Activated CD4-positive, alpha-beta T cell treated with anti-CD3 and anti-CD28 coated beads for 36 hours (primary cell): ENCODE measurements at regions of chr2 and their contacts with region 1.

Region 1: GRCh38 chr2:112054847-112055729 is at the start of gene TMEM87B:
- DNase-seq: peak; percentile 100
- ATAC-seq: peak; percentile 79
- H3K4me3 Mint-ChIP-seq: peak within 1 kb of the TSS; percentile 97
- H3K27ac Mint-ChIP-seq: peak within 1 kb of the TSS; percentile 99
- H3K4me1 Mint-ChIP-seq: peaks cover 37% of the 10 kb centered on the region
- H3K27me3 Mint-ChIP-seq: no peaks in the 10 kb centered on the region
- total RNA-seq, gene TMEM87B: 14.5 to 17.6 TPM

Region 2: GRCh38 chr2:111897924-111898702 is 157.0 kb before region 1 on chr2 and contains the start of gene MERTK:
- CTCF ChIA-PET with region 1: interaction called, 13 read pairs
- POLR2A ChIA-PET with region 1: no interaction called
- intact Hi-C with region 1: loop called in 1 of 2 experiments (anchors 2 kb)
- DNase-seq: peak; percentile 83
- ATAC-seq: peak; percentile 96
- H3K4me3 Mint-ChIP-seq: peak within 1 kb of the TSS; percentile 73
- H3K27ac Mint-ChIP-seq: no peak within 1 kb of the TSS
- H3K4me1 Mint-ChIP-seq: peaks cover 7% of the 10 kb centered on the region
- H3K27me3 Mint-ChIP-seq: peaks cover 15% of the 10 kb centered on the region
- total RNA-seq, gene MERTK: 0.94 to 1.4 TPM

Region 3: DNA sequence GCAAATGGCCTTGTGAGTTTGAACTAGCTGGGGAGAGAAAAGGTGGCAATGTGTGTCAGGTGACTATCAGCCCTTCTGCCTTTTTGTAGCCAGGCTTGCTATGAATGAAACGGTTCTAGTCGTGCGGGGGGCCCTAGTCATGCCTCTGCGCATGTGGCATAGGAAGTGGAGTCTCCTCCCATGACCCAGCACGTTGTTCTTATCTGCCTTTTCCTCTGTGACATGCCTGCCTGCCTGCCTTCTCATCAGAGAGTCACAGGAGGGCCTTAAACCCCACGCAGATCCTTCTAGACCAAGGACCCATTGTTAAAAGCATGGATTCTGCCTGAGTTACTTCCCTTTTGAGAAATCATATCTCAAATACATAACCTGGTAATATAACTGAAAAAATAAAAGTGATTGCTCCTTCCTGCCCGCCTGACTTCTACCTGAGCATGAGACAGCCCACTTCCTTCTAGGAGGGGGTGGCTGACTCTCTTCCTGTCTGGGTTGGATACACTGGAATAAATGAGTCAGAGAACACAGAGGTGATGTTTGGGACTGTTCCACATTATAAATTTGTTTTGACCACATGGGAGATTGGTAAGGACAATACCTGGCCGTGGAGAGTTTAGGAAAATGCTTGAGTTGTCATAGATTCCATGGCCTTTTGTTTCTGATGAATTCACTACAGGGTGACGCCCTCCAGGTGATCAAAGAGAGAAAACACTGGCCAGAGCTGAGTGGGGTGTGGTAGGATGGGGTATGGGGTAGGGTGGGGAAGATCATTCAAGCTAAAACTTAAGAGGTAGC is 132.9 kb after region 1 on chr2:
- CTCF ChIA-PET with region 1: interaction called, 4 read pairs
- POLR2A ChIA-PET with region 1: interaction called, 5 read pairs
- intact Hi-C with region 1: loop called (anchors 1 to 5 kb)
- DNase-seq: peak; percentile 90
- ATAC-seq: peak; percentile 86
- H3K4me3 Mint-ChIP-seq: peak overlapping the region; percentile 62
- H3K27ac Mint-ChIP-seq: peak overlapping the region; percentile 96
- H3K4me1 Mint-ChIP-seq: peaks cover 90% of the 10 kb centered on the region
- H3K27me3 Mint-ChIP-seq: no peaks in the 10 kb centered on the region

Region 4: GRCh38 chr2:112314856-112315255 is 259.8 kb after region 1 on chr2:
- CTCF ChIA-PET with region 1: no interaction called
- POLR2A ChIA-PET with region 1: no interaction called
- intact Hi-C with region 1: no loop called
- DNase-seq: no peak
- ATAC-seq: no peak
- H3K4me3 Mint-ChIP-seq: no peak overlapping the region
- H3K27ac Mint-ChIP-seq: no peak overlapping the region
- H3K4me1 Mint-ChIP-seq: no peaks in the 10 kb centered on the region
- H3K27me3 Mint-ChIP-seq: no peaks in the 10 kb centered on the region

Region 5: GRCh38 chr2:112481050-112481527 is 426.0 kb after region 1 on chr2:
- CTCF ChIA-PET with region 1: no interaction called
- POLR2A ChIA-PET with region 1: no interaction called
- intact Hi-C with region 1: loop called in 1 of 2 experiments (anchors 1 kb)
- DNase-seq: peak; percentile 93
- ATAC-seq: peak; percentile 88
- H3K4me3 Mint-ChIP-seq: peak overlapping the region; percentile 81
- H3K27ac Mint-ChIP-seq: peak overlapping the region; percentile 85
- H3K4me1 Mint-ChIP-seq: peaks cover 32% of the 10 kb centered on the region
- H3K27me3 Mint-ChIP-seq: no peaks in the 10 kb centered on the region

Region 6: DNA sequence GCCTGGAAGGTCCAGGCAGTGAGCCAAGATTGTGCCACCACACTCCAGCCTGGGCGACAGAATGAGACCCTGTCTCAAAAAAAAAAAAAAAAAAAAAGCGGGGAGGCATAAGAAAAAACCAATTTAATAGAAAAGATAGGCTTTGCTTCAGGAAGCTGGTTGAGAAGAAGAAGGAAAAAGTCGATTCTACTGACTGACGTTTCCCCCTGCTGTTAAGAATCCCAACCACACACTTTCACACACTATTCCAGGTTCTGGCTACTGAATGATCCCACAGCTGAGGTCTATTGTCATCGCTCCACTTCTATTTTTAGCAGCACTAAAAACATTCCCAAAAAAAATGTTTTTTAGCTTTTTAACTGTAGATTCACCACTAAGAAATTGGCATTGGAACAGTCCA is 522.7 kb after region 1 on chr2:
- CTCF ChIA-PET with region 1: no interaction called
- POLR2A ChIA-PET with region 1: no interaction called
- intact Hi-C with region 1: no loop called
- DNase-seq: no peak
- ATAC-seq: no peak
- H3K4me3 Mint-ChIP-seq: no peak overlapping the region
- H3K27ac Mint-ChIP-seq: no peak overlapping the region
- H3K4me1 Mint-ChIP-seq: peaks cover 6% of the 10 kb centered on the region
- H3K27me3 Mint-ChIP-seq: no peaks in the 10 kb centered on the region

Region 7: GRCh38 chr2:112764071-112765044 is 709.3 kb after region 1 on chr2 and contains the start of gene CKAP2L:
- CTCF ChIA-PET with region 1: no interaction called
- POLR2A ChIA-PET with region 1: no interaction called
- intact Hi-C with region 1: loop called in 1 of 2 experiments (anchors 5 kb)
- DNase-seq: peak; percentile 98
- ATAC-seq: peak; percentile 97
- H3K4me3 Mint-ChIP-seq: peak within 1 kb of the TSS; percentile 96
- H3K27ac Mint-ChIP-seq: peak within 1 kb of the TSS; percentile 95
- H3K4me1 Mint-ChIP-seq: peaks cover 25% of the 10 kb centered on the region
- H3K27me3 Mint-ChIP-seq: no peaks in the 10 kb centered on the region
- total RNA-seq, gene CKAP2L: 38.4 to 46.7 TPM